CD8-positive, alpha-beta T cell (primary cell): ENCODE measurements at regions of chr5 and their contacts with region 1.

Region 1: DNA sequence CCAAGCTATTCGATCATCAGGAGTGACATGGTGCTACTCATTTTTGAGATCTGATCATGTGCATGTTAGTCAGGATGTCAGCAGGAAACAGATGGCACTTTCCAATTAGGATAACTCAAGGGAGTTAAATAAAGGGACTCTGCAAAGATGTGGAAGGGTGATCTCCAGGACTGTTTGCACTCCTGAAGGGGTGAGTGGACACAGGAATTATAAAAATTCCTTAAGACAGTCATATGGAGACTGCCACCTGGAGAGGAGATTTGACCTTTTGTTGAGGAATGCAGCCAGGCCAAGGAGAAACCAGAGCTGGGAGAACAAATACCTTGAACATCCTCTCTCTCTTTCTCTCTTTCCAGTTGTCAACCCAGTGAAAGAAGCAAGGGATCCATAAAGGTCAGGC is 189.1 kb downstream of the GABRG2 start:
- DNase-seq: no peak
- ATAC-seq: no peak
- H3K4me3 ChIP-seq: no peak overlapping the region
- H3K4me3 Mint-ChIP-seq: no peak overlapping the region
- H3K27ac ChIP-seq: no peak overlapping the region
- H3K27ac Mint-ChIP-seq: no peak overlapping the region
- H3K4me1 ChIP-seq: no peaks in the 10 kb centered on the region
- H3K4me1 Mint-ChIP-seq: no peaks in the 10 kb centered on the region
- H3K27me3 ChIP-seq: no peaks in the 10 kb centered on the region
- H3K27me3 Mint-ChIP-seq: no peaks in the 10 kb centered on the region
- CTCF ChIP-seq: no peak

Region 2: DNA sequence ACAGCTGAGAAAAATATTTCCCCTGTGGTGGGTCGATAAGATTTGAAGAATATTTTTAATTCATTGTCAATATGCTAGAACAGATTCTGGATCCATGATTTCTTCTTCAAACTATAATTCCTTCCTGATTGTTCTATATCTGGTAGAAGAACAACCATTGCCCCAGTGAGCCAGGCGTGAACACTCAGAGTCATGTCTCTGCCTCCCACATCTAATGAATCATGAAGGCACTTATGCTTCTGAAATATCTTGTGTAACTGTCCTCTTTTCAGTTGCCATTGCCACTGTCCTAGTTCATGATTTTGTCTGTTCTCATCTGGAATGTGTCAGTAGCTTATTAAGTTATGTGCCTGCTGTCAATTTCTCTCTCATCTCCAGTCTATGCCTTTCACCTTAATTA is 149.1 kb before region 1 on chr5:
- CTCF ChIA-PET with region 1: no interaction called
- POLR2A ChIA-PET with region 1: no interaction called
- intact Hi-C with region 1: no loop called
- DNase-seq: no peak
- ATAC-seq: no peak
- H3K4me3 ChIP-seq: no peak overlapping the region
- H3K4me3 Mint-ChIP-seq: no peak overlapping the region
- H3K27ac ChIP-seq: no peak overlapping the region
- H3K27ac Mint-ChIP-seq: no peak overlapping the region
- H3K4me1 ChIP-seq: no peaks in the 10 kb centered on the region
- H3K4me1 Mint-ChIP-seq: no peaks in the 10 kb centered on the region
- H3K27me3 ChIP-seq: no peaks in the 10 kb centered on the region
- H3K27me3 Mint-ChIP-seq: no peaks in the 10 kb centered on the region
- CTCF ChIP-seq: no peak

Region 3: DNA sequence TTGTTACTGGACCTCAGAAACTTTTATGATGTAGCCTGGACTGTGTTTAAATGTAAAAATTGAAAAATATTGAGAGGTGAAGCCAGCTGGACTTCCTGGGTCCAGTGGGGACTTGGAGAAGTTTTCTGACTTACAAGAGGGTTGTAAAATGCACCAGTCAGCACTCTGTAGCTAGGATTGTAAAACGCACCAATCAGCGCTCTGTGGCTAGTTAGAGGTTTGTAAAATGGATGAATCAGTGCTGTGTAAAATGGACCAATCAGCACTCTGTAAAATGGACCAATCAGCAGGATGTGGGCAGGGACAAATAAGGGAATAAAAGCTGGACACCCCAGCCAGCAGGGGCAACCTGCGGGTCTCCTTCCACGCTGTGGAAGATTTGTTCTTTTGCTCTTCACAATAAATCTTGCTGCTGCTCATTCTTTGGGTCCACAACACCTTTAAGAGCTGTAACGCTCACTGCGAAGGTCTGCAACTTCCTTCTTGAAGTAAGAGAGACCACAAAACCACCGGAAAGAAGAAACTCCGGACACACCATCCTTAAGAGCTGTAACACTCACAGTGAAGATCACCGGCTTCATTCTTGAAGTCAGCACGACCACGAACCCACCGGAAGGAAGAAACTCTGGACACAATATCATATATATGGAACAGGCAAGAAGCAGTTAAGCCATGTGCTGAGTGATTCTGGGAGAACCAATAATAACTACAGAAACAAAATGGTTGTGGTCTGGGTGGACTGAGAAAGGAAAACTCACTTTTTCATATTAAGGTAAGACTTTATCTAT is 12.2 kb after region 1 on chr5:
- CTCF ChIA-PET with region 1: no interaction called
- POLR2A ChIA-PET with region 1: no interaction called
- intact Hi-C with region 1: loop called in 1 of 2 experiments (anchors 1 kb)
- DNase-seq: no peak
- ATAC-seq: no peak
- H3K4me3 ChIP-seq: no peak overlapping the region
- H3K4me3 Mint-ChIP-seq: no peak overlapping the region
- H3K27ac ChIP-seq: no peak overlapping the region
- H3K27ac Mint-ChIP-seq: no peak overlapping the region
- H3K4me1 ChIP-seq: no peaks in the 10 kb centered on the region
- H3K4me1 Mint-ChIP-seq: no peaks in the 10 kb centered on the region
- H3K27me3 ChIP-seq: no peaks in the 10 kb centered on the region
- H3K27me3 Mint-ChIP-seq: no peaks in the 10 kb centered on the region
- CTCF ChIP-seq: no peak

Region 4: GRCh38 chr5:162283609-162284008 is 26.9 kb after region 1 on chr5:
- CTCF ChIA-PET with region 1: no interaction called
- POLR2A ChIA-PET with region 1: no interaction called
- intact Hi-C with region 1: no loop called
- DNase-seq: no peak
- ATAC-seq: no peak
- H3K4me3 ChIP-seq: no peak overlapping the region
- H3K4me3 Mint-ChIP-seq: no peak overlapping the region
- H3K27ac ChIP-seq: no peak overlapping the region
- H3K27ac Mint-ChIP-seq: no peak overlapping the region
- H3K4me1 ChIP-seq: no peaks in the 10 kb centered on the region
- H3K4me1 Mint-ChIP-seq: no peaks in the 10 kb centered on the region
- H3K27me3 ChIP-seq: no peaks in the 10 kb centered on the region
- H3K27me3 Mint-ChIP-seq: no peaks in the 10 kb centered on the region
- CTCF ChIP-seq: no peak

Region 5: DNA sequence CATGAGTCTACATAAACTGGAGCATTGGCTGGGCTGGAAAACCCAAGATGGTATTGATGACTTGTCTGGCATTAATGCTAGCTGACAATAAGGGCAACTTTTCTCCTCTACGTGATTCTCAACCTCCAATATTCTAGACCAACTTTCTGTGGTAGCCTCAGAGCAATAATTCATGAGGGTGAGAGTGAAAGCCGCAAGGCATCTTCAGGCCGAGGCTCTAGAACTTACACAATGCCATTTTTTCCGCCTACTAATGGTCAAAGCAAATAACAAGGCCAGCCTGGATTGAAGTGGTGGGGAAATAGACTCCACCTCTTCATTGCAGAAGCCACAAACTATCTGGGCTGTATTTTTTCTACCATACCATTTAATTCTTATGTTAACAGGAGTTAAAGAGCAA is 78.2 kb after region 1 on chr5:
- CTCF ChIA-PET with region 1: no interaction called
- POLR2A ChIA-PET with region 1: no interaction called
- intact Hi-C with region 1: no loop called
- DNase-seq: no peak
- ATAC-seq: no peak
- H3K4me3 ChIP-seq: no peak overlapping the region
- H3K4me3 Mint-ChIP-seq: no peak overlapping the region
- H3K27ac ChIP-seq: no peak overlapping the region
- H3K27ac Mint-ChIP-seq: no peak overlapping the region
- H3K4me1 ChIP-seq: no peaks in the 10 kb centered on the region
- H3K4me1 Mint-ChIP-seq: no peaks in the 10 kb centered on the region
- H3K27me3 ChIP-seq: no peaks in the 10 kb centered on the region
- H3K27me3 Mint-ChIP-seq: no peaks in the 10 kb centered on the region
- CTCF ChIP-seq: no peak